ENCODE measurements at regions of chr2 and their contacts with region 1.

Region 1: DNA sequence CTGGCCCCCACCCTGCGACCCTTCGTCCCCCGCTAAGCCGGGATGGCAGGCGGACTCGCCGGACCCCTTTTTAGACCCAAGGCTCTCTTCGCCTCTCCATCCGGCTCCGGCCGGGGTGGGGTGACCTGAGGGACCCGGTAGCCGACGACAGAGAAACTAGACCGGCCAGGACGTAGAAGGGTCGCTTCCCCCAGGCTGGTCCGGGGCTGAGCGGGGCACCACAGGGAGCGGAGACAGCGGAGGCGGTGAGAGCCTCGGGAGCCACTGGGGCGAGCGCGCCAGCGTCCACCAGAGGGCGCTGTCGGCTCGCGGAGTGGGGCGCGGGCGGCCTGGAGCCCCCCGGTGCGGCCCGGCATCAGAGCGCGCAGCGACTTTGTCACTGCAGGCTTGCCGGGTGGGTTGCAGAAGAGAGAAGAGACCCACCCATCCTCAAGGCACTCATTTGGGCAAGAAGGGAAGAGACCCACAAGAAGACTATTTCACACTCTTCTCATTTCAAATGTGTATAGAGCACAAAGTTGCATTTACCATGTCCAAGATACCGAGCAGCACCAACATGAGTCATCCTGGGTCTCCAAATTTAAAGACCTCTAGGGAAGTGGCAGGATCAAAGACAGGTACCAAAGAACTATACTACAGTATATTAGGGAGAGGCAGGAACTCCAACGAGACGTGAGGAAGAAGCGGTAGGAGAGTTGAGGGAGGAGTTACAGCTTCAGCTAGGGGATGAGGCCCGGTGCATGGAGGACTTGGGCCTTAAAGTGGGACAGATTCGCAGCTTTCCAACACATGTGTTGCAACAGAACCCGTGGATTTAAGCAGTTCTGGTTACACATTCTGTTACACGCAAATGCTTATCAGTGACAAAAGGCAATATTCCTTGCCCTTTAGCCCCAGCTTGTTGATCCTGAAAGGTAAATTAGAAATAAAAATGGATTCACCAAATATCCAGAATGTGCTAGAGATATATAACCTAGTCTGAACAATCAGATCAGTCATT is 7.6 kb upstream of the PRKCE start:
- DNase-seq: peak; percentile 70 to 91
- ATAC-seq: peak; percentile 97
- H3K4me3 ChIP-seq: peak overlapping the region in 1 of 2 donors; percentile 25
- H3K27ac ChIP-seq: no peak overlapping the region
- H3K4me1 ChIP-seq: no peaks in the 10 kb centered on the region
- H3K27me3 ChIP-seq: no peaks in the 10 kb centered on the region

Region 2: GRCh38 chr2:45778720-45779171 is 134.9 kb after region 1 on chr2:
- intact Hi-C with region 1: loop called (anchors 2 kb)
- DNase-seq: peak in 1 of 2 donors; percentile 72
- ATAC-seq: peak; percentile 72
- H3K4me3 ChIP-seq: no peak overlapping the region
- H3K27ac ChIP-seq: no peak overlapping the region
- H3K4me1 ChIP-seq: no peaks in the 10 kb centered on the region
- H3K27me3 ChIP-seq: no peaks in the 10 kb centered on the region

Region 3: DNA sequence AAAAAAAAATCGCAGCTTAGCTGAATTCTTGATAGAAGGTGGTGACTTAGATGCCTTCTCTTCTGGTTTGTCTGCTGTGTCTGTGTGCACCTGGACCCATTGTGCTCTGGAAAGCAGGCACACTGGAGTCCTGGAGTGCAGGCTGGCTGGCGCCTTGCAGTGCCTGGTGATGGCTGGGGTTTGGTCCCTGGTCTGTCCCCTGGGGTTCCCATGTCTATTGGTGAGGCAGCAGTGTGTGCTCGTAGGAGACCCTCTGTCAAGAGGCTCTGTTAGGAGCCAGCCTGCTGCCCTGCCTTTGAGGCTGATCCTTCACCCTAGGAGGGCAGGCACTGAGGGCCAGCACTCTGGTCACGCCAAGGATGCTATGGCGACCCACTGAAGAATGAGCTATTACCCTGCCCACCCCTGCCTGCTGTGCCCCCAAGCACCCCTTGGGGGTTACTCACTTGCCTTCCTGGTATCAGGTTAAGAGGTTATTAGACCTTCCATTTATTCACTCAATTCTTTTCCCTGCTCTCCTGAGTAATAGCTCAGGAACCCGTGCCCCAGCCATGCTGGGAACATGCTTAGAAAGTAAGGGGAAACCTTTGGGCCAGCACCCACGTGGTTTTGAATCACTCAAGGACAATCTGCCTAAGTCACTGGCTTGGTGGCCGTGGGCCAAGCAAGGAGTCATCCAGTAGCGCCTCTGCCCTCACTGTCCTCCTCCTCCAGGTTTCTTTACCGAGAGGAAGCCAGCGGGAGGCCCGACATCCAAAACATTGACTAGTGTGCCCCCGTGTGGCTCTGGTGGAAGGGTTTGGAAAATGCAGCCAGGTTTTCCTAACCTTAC is 292.2 kb after region 1 on chr2:
- intact Hi-C with region 1: loop called (anchors 1 to 2 kb)
- DNase-seq: peak; percentile 96 to 98
- ATAC-seq: peak; percentile 91
- H3K4me3 ChIP-seq: no peak overlapping the region
- H3K27ac ChIP-seq: no peak overlapping the region
- H3K4me1 ChIP-seq: peaks cover 0 to 2% of the 10 kb centered on the region in 2 donors
- H3K27me3 ChIP-seq: no peaks in the 10 kb centered on the region

Measured in aorta (tissue), 5 donors.